PC-9 (cell line): ENCODE measurements at regions of chr2 and their contacts with region 1.

Region 1: DNA sequence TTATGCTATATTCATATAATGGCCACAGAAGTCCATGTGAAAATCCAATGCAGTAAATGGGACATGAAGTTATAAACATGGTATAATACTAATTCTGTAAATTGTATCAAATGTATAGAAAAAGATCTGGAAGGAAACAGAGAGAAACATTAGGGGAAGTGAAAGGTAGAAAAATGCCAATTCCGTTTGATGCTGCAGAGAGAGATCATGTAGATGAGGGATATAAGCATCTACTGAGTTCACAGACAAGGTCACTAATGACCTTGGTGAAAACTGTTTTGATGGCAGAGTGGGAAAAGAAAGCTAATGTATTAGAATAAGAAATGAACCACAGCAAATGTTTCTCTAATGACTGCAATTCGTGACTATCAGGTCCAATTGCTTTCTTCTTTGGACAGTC is 56.0 kb downstream of the BARD1 start:
- DNase-seq: no peak
- H3K4me3 ChIP-seq: no peak overlapping the region
- H3K27ac ChIP-seq: no peak overlapping the region
- H3K4me1 ChIP-seq: no peaks in the 10 kb centered on the region
- H3K27me3 ChIP-seq: no peaks in the 10 kb centered on the region
- CTCF ChIP-seq: no peak

Region 2: GRCh38 chr2:214503568-214503967 is 249.9 kb before region 1 on chr2:
- CTCF ChIA-PET with region 1: no interaction called
- POLR2A ChIA-PET with region 1: no interaction called
- intact Hi-C with region 1: no loop called
- DNase-seq: no peak
- H3K4me3 ChIP-seq: no peak overlapping the region
- H3K27ac ChIP-seq: no peak overlapping the region
- H3K4me1 ChIP-seq: no peaks in the 10 kb centered on the region
- H3K27me3 ChIP-seq: no peaks in the 10 kb centered on the region
- CTCF ChIP-seq: no peak

Region 3: DNA sequence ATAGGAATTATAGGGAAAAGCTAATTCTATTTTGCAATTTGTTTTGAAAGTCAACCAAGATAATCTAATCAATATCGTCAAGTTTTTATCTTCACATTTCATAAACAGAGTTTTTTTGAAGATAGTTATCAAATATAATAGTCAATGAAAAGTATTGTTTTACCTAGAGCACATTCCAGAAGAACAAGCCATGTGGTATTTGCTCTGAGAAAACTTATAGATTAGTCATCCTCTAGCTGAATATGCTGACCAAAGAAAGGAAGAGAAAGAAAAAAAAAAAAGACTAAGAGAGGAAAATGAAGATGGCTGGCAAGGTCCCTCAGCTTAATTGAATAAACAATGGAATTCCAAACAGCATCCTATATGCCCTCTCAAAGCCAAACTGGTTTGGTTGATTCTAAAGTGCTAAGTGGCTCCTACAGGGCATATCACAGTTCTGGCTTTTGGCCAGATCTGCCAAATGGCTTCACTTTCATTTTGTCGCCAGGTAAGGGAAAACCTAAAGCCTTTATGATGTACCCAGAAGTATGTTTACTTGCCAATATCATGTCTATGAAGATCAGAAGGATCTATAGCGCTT is 210.0 kb before region 1 on chr2:
- CTCF ChIA-PET with region 1: no interaction called
- POLR2A ChIA-PET with region 1: no interaction called
- intact Hi-C with region 1: no loop called
- DNase-seq: peak; percentile 40 to 66
- H3K4me3 ChIP-seq: no peak overlapping the region
- H3K27ac ChIP-seq: no peak overlapping the region
- H3K4me1 ChIP-seq: 0 out of 2 replicates have a peak, but pooled peaks cover 8% of the 10 kb centered on the region
- H3K27me3 ChIP-seq: no peaks in the 10 kb centered on the region
- CTCF ChIP-seq: no peak

Region 4: DNA sequence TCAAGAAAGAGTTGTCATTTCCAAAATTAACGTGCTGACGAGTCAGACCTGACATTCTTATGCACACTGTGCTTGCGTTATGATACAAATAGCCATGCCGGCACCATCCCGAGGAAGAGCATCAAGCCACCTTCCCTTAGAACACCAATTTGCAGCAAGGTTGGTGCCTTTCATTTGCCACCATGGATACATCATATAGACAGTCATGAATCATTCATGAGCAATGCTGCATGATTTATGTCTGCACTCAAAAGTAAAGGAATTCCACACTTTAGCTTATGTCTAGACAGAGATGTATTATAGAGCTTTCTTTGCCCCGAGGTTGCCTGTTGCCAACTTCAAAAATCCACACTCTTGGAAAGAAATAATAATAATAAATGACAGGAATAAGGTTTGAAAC is 175.7 kb before region 1 on chr2:
- CTCF ChIA-PET with region 1: no interaction called
- POLR2A ChIA-PET with region 1: no interaction called
- intact Hi-C with region 1: no loop called
- DNase-seq: no peak
- H3K4me3 ChIP-seq: no peak overlapping the region
- H3K27ac ChIP-seq: no peak overlapping the region
- H3K4me1 ChIP-seq: no peaks in the 10 kb centered on the region
- H3K27me3 ChIP-seq: no peaks in the 10 kb centered on the region
- CTCF ChIP-seq: no peak

Region 5: DNA sequence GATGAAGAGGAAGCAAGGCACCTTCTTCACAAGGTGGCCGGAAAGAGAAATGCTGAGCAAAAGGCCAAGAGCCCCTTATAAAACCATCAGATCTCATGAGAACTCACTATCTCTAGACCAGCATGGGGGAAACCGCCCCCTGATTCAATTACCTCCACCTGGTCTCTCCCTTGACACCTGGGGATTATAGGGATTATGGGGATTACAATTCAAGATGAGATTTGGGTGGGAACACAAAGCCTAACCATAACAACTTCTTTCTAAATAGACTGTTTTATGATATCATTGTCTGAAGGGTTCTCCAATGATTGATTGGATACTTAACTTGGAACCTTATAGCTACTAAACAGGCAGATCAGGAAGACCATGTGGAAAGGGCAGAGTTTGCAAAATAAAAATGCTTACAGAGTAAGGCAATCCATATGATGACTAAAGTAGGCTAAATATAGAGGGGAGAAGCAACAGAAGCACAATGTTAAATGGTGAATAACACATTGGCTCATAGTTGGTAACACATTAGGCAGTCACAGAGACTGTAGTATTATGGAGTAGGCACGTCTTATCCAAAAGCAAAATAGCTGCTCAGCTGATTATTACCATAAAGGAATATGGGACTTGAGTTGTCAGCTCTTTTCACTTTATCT is 122.9 kb before region 1 on chr2:
- CTCF ChIA-PET with region 1: no interaction called
- POLR2A ChIA-PET with region 1: no interaction called
- intact Hi-C with region 1: no loop called
- DNase-seq: peak in 1 of 2 experiments; percentile 5
- H3K4me3 ChIP-seq: no peak overlapping the region
- H3K27ac ChIP-seq: no peak overlapping the region
- H3K4me1 ChIP-seq: no peaks in the 10 kb centered on the region
- H3K27me3 ChIP-seq: no peaks in the 10 kb centered on the region
- CTCF ChIP-seq: no peak

Region 6: DNA sequence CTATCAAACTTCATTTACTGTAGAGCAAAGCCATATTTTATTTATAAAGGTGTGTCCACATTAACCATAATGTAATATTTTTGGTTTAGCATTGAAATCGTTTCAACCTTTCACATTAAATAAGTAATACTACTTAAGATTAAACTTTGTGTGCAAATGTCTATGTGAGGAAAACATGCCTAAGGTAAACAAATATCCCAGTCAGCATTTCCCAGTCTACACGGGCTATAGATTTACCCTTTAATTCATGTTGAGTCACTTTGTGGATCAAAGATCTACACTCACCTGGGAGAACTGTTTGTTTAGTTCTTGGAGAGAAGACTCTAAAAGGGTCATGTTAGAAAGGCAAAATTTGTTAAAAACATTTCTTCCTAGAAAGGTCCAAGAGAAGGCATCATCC is 295.9 kb after region 1 on chr2:
- CTCF ChIA-PET with region 1: interaction called, 10 read pairs
- POLR2A ChIA-PET with region 1: no interaction called
- intact Hi-C with region 1: no loop called
- DNase-seq: no peak
- H3K4me3 ChIP-seq: no peak overlapping the region
- H3K27ac ChIP-seq: no peak overlapping the region
- H3K4me1 ChIP-seq: no peaks in the 10 kb centered on the region
- H3K27me3 ChIP-seq: no peaks in the 10 kb centered on the region
- CTCF ChIP-seq: no peak